T-cell (primary cell): ENCODE measurements at regions of chr11 and their contacts with region 1.

Region 1: GRCh38 chr11:105220121-105220520 is 80.6 kb upstream of the CARD18 start:
- DNase-seq: no peak
- ATAC-seq: no peak
- H3K4me3 ChIP-seq: no peak overlapping the region
- H3K4me3 Mint-ChIP-seq: no peak overlapping the region
- H3K27ac ChIP-seq: no peak overlapping the region
- H3K27ac Mint-ChIP-seq: no peak overlapping the region
- H3K4me1 ChIP-seq: no peaks in the 10 kb centered on the region
- H3K4me1 Mint-ChIP-seq: no peaks in the 10 kb centered on the region
- H3K27me3 ChIP-seq: no peaks in the 10 kb centered on the region
- H3K27me3 Mint-ChIP-seq: peaks cover 2 to 8% of the 10 kb centered on the region in 2 donors

Region 2: DNA sequence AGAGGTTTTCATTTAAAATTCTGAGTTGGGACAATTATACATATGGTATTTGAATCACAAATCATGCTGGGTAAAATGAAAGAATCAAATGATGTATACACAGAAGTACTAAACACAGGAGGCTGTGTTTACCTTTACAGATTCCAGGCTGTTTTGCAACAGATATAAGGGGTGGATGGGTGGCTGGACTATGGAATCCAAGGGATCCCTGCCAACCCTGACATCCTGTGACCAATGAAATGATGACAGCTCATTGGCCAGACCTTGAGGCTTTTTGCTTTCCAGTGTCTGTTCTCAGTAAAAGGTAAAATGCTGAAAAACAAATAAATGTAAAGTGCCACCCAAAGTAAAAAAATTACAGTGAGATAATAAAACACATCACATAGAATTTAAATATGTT is 1187.0 kb before region 1 on chr11:
- CTCF ChIA-PET with region 1: no interaction called
- POLR2A ChIA-PET with region 1: no interaction called
- DNase-seq: no peak
- ATAC-seq: no peak
- H3K4me3 ChIP-seq: no peak overlapping the region
- H3K4me3 Mint-ChIP-seq: no peak overlapping the region
- H3K27ac ChIP-seq: no peak overlapping the region
- H3K27ac Mint-ChIP-seq: no peak overlapping the region
- H3K4me1 ChIP-seq: no peaks in the 10 kb centered on the region
- H3K4me1 Mint-ChIP-seq: no peaks in the 10 kb centered on the region
- H3K27me3 ChIP-seq: no peaks in the 10 kb centered on the region
- H3K27me3 Mint-ChIP-seq: no peaks in the 10 kb centered on the region

Region 3: GRCh38 chr11:105265859-105266258 is 45.7 kb after region 1 on chr11:
- CTCF ChIA-PET with region 1: no interaction called
- POLR2A ChIA-PET with region 1: interaction called in 1 of 2 experiments, 13 read pairs
- DNase-seq: no peak
- ATAC-seq: no peak
- H3K4me3 ChIP-seq: no peak overlapping the region
- H3K4me3 Mint-ChIP-seq: no peak overlapping the region
- H3K27ac ChIP-seq: no peak overlapping the region
- H3K27ac Mint-ChIP-seq: no peak overlapping the region
- H3K4me1 ChIP-seq: no peaks in the 10 kb centered on the region
- H3K4me1 Mint-ChIP-seq: peaks cover 0 to 4% (median 0%) of the 10 kb centered on the region in 3 donors
- H3K27me3 ChIP-seq: no peaks in the 10 kb centered on the region
- H3K27me3 Mint-ChIP-seq: peaks cover 0 to 2% of the 10 kb centered on the region in 2 donors